Motor neuron (in vitro differentiated cells): ENCODE measurements at regions of chr5 and their contacts with region 1.

Region 1: DNA sequence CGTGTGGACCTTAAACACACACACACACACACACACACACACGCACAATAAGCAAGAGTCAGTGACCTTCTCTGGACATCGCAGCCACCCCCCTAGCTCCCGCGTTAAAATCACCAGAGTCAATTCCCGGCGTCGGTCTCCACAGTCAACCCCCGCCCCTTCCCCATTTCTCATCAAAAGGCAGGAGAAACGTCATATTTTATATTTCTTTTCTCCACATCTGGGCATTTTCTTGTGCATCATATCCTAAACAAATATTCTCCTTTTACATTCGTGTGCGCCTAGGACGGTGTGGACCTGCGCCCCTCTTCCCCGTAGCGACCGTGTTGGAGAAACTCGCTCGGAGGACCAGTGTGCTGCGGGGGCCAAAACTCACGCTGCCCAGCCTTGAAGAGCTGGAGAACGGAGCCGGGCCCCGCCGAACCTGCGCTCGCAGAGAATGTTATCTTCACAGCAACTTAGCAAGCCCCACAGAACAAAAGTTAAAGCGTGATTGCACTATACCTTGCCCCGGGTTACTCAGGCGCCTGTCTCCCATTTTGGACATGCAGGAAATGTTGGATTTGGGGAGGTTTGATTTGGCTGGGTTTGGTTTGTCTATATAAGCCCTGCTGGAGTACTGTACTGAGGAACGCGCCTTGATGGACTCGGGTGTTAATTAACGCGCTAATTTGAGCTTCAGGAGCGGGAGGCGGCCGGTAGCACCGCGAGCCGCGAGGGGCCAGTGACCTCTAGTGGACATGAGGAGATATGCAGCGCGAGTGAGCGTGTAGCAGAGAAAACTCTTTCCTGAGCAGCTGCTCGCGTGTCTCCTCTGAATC is 192.4 kb downstream of the MEF2C start:
- ATAC-seq: peak; percentile 76 to 90 (median 88)
- H3K4me3 ChIP-seq: peak overlapping the region; percentile 25 to 38 (median 27)
- H3K27ac ChIP-seq: no peak overlapping the region
- H3K4me1 ChIP-seq: peaks cover 6 to 17% of the 10 kb centered on the region in 2 donors

Region 2: DNA sequence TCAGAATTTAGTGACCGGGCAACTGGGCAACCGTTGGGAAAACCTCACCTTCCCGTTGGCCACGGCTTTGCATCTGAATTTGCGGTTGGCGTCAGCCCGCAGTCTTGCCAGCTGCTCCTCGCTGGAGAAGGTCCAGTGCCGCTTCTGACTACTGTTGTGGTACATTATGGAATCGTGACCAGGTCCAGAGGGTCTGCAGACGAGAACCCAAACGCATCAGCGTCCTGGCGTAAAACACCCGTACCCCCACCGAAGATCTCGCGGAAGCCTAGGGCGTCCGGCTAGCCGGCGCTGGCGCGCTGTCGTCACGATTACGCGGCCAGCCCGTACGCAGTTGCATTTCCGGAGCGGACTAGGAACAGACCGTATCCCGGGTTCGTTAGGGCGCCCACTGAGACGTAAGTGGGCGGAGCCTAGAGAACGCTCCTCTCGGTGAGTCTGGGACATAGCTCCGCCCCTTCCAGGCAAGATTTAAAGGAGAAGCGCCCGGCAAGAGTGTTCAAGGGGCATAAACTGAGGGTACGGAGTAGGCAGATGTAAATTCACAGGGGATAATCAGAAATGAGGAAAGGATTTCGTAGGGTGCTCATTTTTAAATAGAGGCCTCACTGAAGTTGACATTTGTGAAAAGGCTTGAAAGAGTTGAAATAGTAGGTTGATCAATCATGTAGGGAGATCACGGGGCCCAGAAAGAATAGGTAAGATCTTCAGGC is 1277.8 kb before region 1 on chr5 and contains the start of gene CCNH:
- in situ Hi-C with region 1: loop called in 4 of 9 experiments (anchors 25 kb)
- ATAC-seq: peak; percentile 92 to 98 (median 97)
- H3K4me3 ChIP-seq: peak within 1 kb of the TSS; percentile 60 to 90 (median 87)
- H3K27ac ChIP-seq: peak within 1 kb of the TSS; percentile 81 to 88
- H3K4me1 ChIP-seq: peaks cover 8 to 14% of the 10 kb centered on the region in 2 donors
- total RNA-seq, gene CCNH: 45.5 to 103 (median 74.3) TPM

Region 3: DNA sequence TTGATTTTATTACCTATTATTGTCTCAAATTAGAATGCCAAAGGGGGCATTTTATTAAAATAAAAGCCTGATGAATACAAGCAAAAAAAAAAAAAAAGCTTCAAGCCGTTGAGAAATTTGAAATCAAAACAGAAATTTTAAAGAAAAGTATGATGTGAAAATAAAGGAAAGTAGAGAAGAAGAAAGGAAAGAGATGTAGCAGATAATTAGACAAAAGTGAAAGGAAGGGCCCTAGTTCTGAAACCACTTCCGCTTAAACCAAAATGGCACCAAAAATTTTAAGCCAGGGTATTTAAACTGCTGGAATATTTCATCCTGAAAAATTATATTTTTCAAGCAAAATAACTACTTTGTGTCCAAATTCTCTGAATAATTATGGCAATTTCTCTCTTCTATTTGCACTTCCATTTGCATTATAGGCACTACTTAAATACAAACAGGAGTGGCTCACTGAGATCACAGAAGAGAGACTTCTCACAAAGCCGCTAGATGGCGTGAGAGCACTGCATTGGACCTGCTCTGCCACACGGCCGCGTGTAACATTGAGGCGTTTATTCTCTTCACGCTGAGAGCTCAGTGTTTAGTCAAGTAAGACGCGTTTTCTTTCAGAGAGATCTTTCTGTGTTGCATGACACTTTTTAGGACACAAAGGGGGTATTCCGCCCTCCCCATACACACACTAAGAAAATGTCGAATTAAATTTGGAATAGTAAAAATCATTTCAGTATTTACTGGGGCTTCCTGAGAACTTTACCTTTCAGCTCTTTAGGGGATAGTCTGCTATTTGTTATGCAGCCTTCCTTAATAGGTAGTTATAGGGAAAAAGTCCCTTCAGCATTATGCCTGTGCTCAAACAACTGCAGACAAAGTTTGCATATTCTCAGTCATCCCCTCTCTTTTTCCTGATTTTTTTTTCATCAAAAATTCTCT is 909.5 kb before region 1 on chr5:
- in situ Hi-C with region 1: loop called (anchors 10 to 25 kb)
- ATAC-seq: peak; percentile 100
- H3K4me3 ChIP-seq: peak overlapping the region in 1 of 5 donors; percentile 20
- H3K27ac ChIP-seq: no peak overlapping the region
- H3K4me1 ChIP-seq: no peaks in the 10 kb centered on the region

Region 4: GRCh38 chr5:88555674-88556073 is 134.9 kb before region 1 on chr5:
- in situ Hi-C with region 1: no loop called
- ATAC-seq: peak in 5 of 8 experiments; percentile 88 to 91 (median 89)
- H3K4me3 ChIP-seq: no peak overlapping the region
- H3K27ac ChIP-seq: peak overlapping the region in 1 of 2 donors; percentile 6
- H3K4me1 ChIP-seq: peaks cover 27 to 40% of the 10 kb centered on the region in 2 donors